ENCODE measurements at regions of chr1 and their contacts with region 1.

Region 1: DNA sequence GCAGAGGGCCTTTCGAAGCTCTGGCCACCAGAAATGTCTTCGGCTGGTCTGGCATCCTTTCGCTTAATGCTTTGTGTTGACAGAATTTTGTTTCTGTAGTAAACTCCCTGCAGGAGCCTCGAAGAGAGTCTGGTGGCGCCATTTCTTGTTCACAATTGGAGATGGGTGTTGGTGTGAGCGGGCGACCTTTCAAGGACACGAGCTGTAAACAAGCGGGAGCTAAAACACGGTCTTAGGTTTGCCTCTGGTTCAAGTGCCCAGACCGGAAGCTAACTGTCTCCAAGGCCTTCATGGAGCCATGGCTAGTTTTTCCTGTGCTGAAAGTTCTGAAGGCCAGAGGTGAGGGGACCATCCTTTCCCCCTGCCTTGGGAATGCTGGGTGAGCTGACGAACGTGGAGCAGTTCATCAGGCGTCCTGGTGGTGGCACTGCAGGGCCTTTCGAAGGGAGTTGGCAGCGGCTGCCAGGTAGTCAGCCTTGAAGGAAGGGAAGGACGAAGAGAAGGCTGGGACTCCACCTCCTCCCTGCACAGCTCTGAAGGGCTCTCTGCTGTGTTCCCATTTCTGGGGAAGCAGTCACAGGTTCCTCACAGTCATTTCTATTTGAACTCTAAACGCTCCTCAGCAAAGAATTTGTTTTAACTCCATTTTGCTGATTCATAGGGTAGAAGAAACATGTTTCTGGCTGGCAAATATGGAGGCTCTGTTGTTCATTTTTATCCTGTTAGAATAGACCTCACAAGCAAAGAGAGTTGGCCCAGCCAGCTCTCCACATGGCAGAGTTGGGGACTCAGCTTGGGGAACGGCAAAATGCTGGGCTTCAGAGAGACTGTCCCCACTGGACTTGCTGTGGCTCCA is 35.2 kb downstream of the URB2 start:
- DNase-seq: peak; percentile 89
- ATAC-seq: peak; percentile 90

Region 2: DNA sequence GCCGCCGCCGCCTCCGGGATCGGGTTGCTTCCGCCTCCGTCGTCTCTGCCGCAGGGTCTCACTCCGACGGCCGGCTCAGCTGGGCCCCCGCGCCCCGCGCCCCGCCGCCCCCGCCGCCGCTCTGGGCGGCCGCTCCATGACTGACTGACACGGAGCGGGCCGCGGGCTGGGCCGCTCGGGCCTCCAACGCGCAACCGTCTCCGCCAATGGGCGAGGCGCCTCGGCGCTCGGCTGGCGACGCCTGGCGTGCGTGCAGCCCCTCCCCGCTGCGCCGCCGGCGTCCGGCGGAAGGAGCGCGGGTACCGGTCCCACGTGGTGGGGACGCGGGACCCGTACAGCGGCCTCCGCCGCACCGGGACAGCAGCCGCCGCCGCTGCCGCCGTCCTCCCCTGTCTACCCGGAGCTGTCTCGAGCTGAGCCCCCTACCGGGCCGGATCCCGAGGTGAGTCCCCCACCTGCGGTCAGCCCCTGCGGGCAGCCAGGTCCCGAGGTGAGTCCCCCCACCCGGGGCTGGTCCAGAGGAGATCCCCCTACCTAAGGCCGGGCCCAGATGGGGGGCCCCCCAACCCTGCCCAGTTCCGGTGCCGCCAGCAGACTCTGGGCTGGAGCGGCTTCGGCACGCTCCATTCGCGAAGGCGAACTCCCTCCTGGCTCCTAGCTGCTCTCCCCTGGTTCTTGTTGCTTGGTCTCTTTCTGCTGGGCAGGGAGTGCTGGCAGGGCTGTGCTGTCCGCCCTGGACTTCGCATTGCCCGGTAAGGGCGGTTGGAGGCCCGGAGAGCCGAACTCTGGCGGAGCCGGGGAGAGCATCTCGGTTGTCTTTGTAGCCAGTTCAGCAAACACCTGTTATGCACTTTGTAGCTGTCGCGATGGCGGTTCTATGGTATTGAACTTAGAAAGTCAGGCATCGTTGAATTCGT is 35.1 kb before region 1 on chr1 and contains the starts of genes TAF5L and URB2:
- intact Hi-C with region 1: no loop called
- DNase-seq: peak; percentile 94
- ATAC-seq: peak; percentile 98
- total RNA-seq, gene TAF5L: 10.8 TPM
- total RNA-seq, gene URB2: 3.4 TPM

Region 3: GRCh38 chr1:229643996-229644745 is 17.1 kb before region 1 on chr1:
- intact Hi-C with region 1: no loop called
- DNase-seq: no peak
- ATAC-seq: no peak

Region 4: DNA sequence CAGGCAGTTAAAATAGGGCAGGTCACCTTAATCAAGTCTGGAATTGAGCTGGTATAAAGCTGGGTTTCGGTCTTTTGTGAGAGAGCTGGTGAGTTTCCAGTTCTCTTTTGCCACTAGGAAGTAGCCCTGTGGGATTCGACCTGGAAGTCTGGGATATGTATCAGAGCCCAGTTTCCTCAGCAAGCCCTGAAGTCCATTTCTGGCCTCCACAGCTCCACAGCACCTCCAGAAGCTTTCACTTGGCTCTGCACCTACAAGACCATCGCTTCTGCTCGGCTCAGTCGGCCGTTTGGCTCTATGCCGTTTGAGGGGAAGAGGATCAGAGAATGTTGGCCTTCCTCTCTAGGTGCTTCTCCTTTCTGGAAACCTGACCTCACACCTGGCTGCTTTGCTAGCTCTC is 553.8 kb after region 1 on chr1:
- intact Hi-C with region 1: loop called (anchors 5 kb)
- DNase-seq: peak; percentile 69
- ATAC-seq: peak; percentile 90

Region 5: DNA sequence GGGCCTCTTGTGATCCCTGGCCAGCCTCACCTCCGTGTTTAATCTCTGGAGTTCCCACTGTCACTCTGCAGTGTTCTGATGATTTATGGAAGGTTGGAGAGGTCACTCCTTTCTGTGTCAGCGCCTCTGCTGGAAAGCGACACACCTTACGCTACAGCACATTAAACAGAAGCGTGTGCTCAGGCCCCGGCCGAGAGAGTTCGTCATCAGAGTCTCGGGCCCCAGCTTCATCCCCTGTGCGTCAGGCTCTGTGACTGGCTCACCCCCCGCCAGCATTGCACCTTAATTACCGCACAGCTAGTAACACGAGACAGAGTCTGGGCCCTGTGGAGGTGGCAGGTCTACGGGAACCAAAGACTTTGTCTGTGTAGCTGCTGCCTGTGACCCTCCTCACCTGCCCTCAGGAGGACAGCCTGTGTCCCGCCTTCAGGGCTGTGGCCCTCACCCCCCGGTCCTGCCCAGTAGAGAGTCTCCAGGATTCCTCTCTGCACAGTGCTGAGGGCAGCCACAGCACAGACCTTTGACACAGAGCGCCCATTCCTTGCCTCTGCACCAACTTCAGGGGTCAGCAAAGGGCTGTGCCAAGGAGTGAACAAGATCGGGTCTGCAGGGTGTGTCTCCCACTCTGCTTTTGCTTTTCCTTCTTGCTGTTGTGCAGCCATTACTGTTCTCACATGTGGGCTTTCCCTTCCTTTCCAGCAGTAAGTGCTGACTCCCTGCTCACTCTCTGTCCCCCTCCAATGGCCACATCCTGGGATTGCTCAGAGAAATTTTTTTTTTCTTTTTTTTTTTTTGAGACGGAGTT is 607.3 kb after region 1 on chr1:
- intact Hi-C with region 1: loop called (anchors 5 kb)
- DNase-seq: peak; percentile 55
- ATAC-seq: peak; percentile 61

Region 6: GRCh38 chr1:230310381-230311163 is 649.3 kb after region 1 on chr1:
- intact Hi-C with region 1: loop called (anchors 1 kb)
- DNase-seq: peak; percentile 90
- ATAC-seq: peak; percentile 88

Measured in Right ventricle myocardium inferior (tissue), 1 donor.